ENCODE measurements at regions of chr10 and their contacts with region 1.

Region 1: GRCh38 chr10:89481662-89482061 is 53.7 kb downstream of the SLC16A12 start:
- DNase-seq: no peak
- H3K4me3 ChIP-seq: no peak overlapping the region
- H3K27ac ChIP-seq: peak overlapping the region; percentile 29 to 62
- H3K4me1 ChIP-seq: peaks cover 6 to 48% of the 10 kb centered on the region in 2 donors
- H3K27me3 ChIP-seq: no peaks in the 10 kb centered on the region
- CTCF ChIP-seq: no peak

Region 2: DNA sequence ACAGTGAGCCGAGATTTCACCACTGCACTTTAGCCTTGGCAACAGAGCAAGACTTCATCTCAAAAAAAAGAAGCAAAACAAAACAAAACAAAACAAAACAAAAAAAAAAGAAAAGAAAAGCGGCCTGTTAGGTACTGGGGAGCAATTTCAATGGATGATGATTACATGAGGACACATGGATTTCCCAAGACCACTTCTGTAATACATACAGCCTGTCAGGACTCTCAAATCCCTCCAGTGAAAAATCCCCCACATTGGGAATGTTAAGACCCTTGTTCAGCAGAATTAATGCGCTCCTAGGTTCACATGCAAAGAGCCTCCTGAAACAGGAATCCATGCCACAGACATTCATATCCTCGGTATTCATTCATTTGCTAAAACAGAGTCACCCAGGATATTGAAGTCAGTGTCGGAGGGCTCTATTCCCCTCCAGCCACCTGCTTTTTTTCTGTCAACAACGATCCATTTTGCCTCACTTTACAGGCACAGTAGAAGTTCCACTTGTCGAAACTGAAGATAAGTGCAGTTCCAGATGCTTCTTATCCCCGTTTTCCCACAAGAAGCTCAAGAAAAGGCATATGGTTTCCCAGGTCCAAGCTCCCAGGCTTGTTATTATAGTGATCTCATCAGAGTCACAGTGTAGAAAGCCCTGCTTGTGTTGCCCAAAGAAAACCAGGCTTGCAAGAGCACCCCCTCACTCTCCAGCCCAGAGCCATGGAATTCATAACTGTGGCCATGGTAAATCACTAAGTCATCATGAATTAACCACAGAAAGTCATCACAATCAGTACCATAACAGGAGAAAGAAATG is 33.6 kb after region 1 on chr10:
- intact Hi-C with region 1: loop called (anchors 2 kb)
- DNase-seq: peak in 1 of 2 donors; percentile 81
- H3K4me3 ChIP-seq: peak overlapping the region in 1 of 2 donors; percentile 47
- H3K27ac ChIP-seq: peak overlapping the region; percentile 56 to 67
- H3K4me1 ChIP-seq: peaks cover 0 to 25% of the 10 kb centered on the region in 2 donors
- H3K27me3 ChIP-seq: no peaks in the 10 kb centered on the region
- CTCF ChIP-seq: no peak

Region 3: GRCh38 chr10:89563861-89564478 is 82.3 kb after region 1 on chr10:
- intact Hi-C with region 1: loop called (anchors 5 kb)
- DNase-seq: no peak
- H3K4me3 ChIP-seq: no peak overlapping the region
- H3K27ac ChIP-seq: no peak overlapping the region
- H3K4me1 ChIP-seq: no peaks in the 10 kb centered on the region
- H3K27me3 ChIP-seq: no peaks in the 10 kb centered on the region
- CTCF ChIP-seq: peak; percentile 68 to 78 (median 75)

Measured in ascending aorta (tissue), 2 donors.